ENCODE measurements at regions of chr4 and their contacts with region 1.

Region 1: DNA sequence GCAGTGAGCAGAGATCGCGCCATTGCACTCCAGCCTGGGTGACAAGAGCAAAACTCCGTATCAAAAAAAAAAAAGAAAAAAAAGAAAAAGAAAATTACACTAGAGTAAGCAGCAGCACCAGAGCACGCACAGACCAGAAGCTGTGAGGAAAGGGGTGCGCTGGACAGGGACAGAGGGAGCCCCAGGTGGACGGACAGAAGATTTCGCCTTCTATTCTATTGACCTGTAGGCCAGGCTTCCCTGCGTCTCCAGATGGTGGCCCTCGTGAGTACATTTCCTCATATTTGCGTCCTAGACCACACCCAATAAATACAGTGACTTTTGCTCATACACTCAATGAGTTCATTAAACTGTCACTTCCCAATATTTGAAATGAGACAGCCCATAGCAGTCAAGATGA is 19.1 kb downstream of the MTNR1A start:
- DNase-seq: no peak
- H3K4me3 ChIP-seq: no peak overlapping the region
- H3K27ac ChIP-seq: no peak overlapping the region
- H3K4me1 ChIP-seq: no peaks in the 10 kb centered on the region
- H3K27me3 ChIP-seq: no peaks in the 10 kb centered on the region
- CTCF ChIP-seq: peak; percentile 65 to 92 (median 74)
- EP300 ChIP-seq: no peak
- POLR2A ChIP-seq: no peak
- RAD21 ChIP-seq: peak; percentile 42 to 61; a peak in 3 of 4 replicates

Region 2: GRCh38 chr4:186058253-186058979 is 477.9 kb before region 1 on chr4:
- CTCF ChIA-PET with region 1: no interaction called
- POLR2A ChIA-PET with region 1: no interaction called
- DNase-seq: no peak
- H3K4me3 ChIP-seq: no peak overlapping the region
- H3K27ac ChIP-seq: no peak overlapping the region
- H3K4me1 ChIP-seq: no peaks in the 10 kb centered on the region
- H3K27me3 ChIP-seq: no peaks in the 10 kb centered on the region
- CTCF ChIP-seq: no peak
- EP300 ChIP-seq: no peak
- POLR2A ChIP-seq: no peak
- RAD21 ChIP-seq: no peak

Region 3: DNA sequence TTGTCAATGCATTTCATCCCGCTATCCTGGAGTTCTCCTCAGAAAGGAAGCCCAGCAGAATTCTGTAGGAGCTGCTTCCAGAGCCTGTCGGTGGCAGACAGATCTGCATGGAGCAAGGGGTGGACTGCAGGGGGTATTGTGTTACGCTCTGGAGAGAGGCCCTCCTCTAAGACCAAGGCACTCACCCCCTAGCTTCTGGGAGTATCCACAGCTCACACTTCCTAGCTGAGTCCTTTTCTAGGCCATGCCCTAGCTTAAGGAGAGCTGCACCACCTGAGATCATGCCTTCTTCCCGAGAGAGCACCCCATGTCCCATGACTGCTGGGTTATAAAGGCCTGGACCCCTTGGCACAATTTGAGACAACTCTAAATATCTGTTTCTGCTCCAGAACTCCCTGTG is 20.0 kb before region 1 on chr4:
- CTCF ChIA-PET with region 1: interaction called, 10 read pairs
- POLR2A ChIA-PET with region 1: no interaction called
- DNase-seq: no peak
- H3K4me3 ChIP-seq: no peak overlapping the region
- H3K27ac ChIP-seq: no peak overlapping the region
- H3K4me1 ChIP-seq: no peaks in the 10 kb centered on the region
- H3K27me3 ChIP-seq: no peaks in the 10 kb centered on the region; a peak in 2 of 7 replicates
- CTCF ChIP-seq: no peak
- EP300 ChIP-seq: no peak
- POLR2A ChIP-seq: no peak
- RAD21 ChIP-seq: no peak

Region 4: DNA sequence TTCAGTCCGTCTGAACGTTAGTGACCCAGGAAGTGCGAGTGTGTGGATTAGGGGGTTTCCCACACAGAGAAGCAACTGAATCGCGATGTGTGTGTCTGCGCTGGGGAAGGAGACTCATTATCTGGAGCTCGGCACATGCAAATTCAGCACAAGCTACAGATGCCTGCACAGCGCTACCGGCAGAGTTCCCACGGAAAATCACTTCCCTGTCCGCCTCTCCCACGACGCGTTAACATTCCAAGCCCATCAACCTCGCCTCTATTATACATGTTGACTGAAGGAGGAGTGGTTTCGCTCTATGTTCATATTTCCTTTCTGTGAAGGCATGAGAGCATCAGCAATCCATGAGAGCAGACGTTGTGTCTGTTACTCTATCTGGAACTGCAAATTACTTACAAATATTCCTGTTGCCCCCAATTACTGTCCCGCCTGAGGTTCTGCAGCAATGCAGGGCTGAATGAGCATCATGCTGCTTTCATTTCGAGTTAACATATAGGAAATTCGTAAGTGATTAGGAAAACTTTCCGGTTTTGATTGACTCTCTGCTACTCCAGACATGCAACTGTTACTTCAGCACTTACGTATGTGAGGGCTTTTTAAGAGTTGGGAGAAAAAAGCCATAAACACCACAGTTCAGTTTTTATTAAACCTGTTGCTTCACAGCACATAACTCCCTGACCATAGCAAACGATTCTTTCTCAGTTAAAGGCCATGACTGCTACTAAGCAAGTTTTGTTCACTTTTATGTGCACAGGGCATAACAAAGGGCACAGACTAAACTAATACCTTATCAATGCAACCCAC is 34.1 kb after region 1 on chr4:
- CTCF ChIA-PET with region 1: no interaction called
- POLR2A ChIA-PET with region 1: no interaction called
- DNase-seq: no peak
- H3K4me3 ChIP-seq: no peak overlapping the region
- H3K27ac ChIP-seq: no peak overlapping the region
- H3K4me1 ChIP-seq: no peaks in the 10 kb centered on the region
- H3K27me3 ChIP-seq: no peaks in the 10 kb centered on the region
- CTCF ChIP-seq: no peak
- EP300 ChIP-seq: no peak
- POLR2A ChIP-seq: no peak
- RAD21 ChIP-seq: no peak

Region 5: GRCh38 chr4:187094144-187094543 is 557.9 kb after region 1 on chr4:
- CTCF ChIA-PET with region 1: no interaction called
- POLR2A ChIA-PET with region 1: no interaction called
- DNase-seq: no peak
- H3K4me3 ChIP-seq: no peak overlapping the region
- H3K27ac ChIP-seq: no peak overlapping the region
- H3K4me1 ChIP-seq: no peaks in the 10 kb centered on the region
- H3K27me3 ChIP-seq: no peaks in the 10 kb centered on the region
- CTCF ChIP-seq: no peak
- EP300 ChIP-seq: no peak
- POLR2A ChIP-seq: no peak
- RAD21 ChIP-seq: no peak

Measured in H1 (cell line).